AG04450 (cell line): ENCODE measurements at regions of chr14 and their contacts with region 1.

Region 1: GRCh38 chr14:31207755-31208545 is at the start of gene HECTD1:
- DNase-seq: peak; percentile 53
- H3K4me3 ChIP-seq: peak within 1 kb of the TSS; percentile 79
- H3K27ac ChIP-seq: peak within 1 kb of the TSS; percentile 99
- H3K27me3 ChIP-seq: no peaks in the 10 kb centered on the region
- CTCF ChIP-seq: peak; percentile 39
- polyA plus RNA-seq, gene HECTD1: 96.5 and 121 TPM in 2 replicates

Region 2: DNA sequence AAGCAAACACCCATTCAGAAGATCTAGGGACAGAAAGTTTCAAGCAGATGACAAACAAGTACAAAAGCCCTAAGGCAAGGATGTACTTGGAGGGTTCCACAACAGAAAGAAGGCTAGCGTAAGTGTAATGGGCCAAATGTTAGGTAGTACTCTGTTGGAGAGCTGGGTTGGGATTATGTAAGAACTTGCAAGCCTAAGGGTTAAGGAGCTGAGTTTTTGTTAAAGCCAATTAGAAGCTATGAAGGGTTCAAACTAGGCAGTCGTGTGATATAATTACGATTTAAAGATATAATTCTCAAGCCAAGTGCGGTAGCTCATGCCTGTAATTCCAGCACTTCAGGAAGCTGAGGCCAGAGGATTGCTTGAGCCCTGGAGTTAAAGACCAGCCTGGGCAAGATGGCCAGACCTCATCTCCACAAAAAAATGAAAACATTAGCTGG is 41.7 kb before region 1 on chr14:
- CTCF ChIA-PET with region 1: interaction called, 4 read pairs
- POLR2A ChIA-PET with region 1: interaction called, 11 read pairs
- DNase-seq: no peak
- H3K4me3 ChIP-seq: no peak overlapping the region
- H3K27ac ChIP-seq: peak overlapping the region; percentile 75
- H3K27me3 ChIP-seq: no peaks in the 10 kb centered on the region
- CTCF ChIP-seq: no peak

Region 3: DNA sequence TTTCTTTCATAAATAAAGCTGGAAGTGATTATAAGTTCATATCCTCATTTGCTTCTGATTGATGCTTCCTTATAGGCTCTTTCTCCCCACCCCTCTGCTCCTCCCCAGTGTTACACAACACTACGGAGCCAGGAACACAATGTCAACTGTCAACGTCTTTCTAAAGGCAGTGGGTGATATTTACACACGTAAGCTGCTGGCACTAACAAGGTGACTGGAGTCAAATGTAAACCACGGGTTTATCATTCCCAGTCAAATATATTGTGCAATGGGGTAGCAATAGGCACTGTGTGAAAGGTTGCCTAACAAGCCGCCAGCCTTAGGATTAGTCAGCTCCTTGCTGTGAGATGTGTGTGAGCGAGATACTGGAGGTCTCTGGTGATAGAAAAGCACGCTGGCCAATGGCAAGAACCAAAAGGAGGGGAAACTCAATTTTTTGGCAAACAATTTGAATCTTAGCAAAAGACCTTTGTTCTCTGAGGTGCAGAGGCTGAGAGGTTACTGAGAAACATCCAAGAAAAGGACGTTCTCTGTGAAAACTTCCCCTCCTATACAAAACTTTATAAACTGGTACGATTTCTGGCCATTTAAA is 21.8 kb after region 1 on chr14:
- CTCF ChIA-PET with region 1: interaction called, 19 read pairs
- POLR2A ChIA-PET with region 1: interaction called, 3 read pairs
- DNase-seq: peak; percentile 88
- H3K4me3 ChIP-seq: peak overlapping the region; percentile 24
- H3K27ac ChIP-seq: peak overlapping the region; percentile 57
- H3K27me3 ChIP-seq: no peaks in the 10 kb centered on the region
- CTCF ChIP-seq: no peak

Region 4: GRCh38 chr14:31263485-31264133 is 55.7 kb after region 1 on chr14:
- CTCF ChIA-PET with region 1: no interaction called
- POLR2A ChIA-PET with region 1: interaction called, 23 read pairs
- DNase-seq: peak; percentile 99
- H3K4me3 ChIP-seq: no peak overlapping the region
- H3K27ac ChIP-seq: peak overlapping the region; percentile 94
- H3K27me3 ChIP-seq: no peaks in the 10 kb centered on the region
- CTCF ChIP-seq: no peak

Region 5: DNA sequence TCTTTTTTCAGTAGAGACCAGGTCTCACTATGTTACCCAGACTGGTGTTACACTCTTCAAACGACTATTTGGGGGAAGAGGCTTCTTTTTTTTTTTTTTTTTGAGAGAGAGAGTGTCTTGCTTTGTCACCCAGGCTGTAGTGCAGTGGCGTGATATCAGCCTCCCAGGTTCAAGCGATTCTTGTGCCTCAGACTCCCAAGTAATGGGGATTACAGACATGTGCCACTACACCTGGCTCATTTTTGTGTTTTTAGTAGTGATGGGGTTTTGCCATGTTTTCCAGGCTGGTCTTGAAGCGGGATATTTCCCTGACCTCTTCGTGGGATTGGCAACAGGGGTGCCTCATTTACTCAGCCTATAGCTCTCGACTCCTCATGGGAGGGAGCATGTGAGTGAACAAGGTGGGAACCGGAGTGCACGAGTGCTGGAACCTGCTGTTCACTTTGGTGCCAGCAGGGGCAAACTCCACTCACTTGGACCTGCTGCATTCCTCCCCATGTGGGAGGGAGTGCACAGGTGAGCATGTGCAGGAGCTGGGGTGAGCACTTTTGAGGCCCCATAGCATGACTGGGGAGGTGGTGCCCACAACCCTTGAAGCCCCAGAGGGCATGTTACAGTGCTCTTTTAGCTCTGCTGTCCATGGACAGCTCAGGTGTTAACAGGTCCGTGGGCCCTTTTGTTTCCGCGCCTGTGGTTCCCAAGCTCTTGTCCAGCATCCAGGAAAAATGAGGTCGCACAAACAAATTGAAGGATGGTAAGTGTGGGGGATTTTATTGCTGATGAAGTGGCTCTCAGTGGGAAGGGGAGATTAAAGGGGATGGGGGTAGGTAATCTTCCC is 78.7 kb after region 1 on chr14:
- CTCF ChIA-PET with region 1: no interaction called
- POLR2A ChIA-PET with region 1: no interaction called
- DNase-seq: no peak
- H3K4me3 ChIP-seq: no peak overlapping the region
- H3K27ac ChIP-seq: no peak overlapping the region
- H3K27me3 ChIP-seq: no peaks in the 10 kb centered on the region
- CTCF ChIP-seq: 0 out of 2 replicates have a peak, but pooled peaks have one; percentile 24

Region 6: GRCh38 chr14:31380106-31380505 is 172.2 kb after region 1 on chr14:
- CTCF ChIA-PET with region 1: no interaction called
- POLR2A ChIA-PET with region 1: no interaction called
- DNase-seq: no peak
- H3K4me3 ChIP-seq: no peak overlapping the region
- H3K27ac ChIP-seq: no peak overlapping the region
- H3K27me3 ChIP-seq: no peaks in the 10 kb centered on the region
- CTCF ChIP-seq: no peak